ENCODE measurements at regions of chr7 and their contacts with region 1.

Region 1: DNA sequence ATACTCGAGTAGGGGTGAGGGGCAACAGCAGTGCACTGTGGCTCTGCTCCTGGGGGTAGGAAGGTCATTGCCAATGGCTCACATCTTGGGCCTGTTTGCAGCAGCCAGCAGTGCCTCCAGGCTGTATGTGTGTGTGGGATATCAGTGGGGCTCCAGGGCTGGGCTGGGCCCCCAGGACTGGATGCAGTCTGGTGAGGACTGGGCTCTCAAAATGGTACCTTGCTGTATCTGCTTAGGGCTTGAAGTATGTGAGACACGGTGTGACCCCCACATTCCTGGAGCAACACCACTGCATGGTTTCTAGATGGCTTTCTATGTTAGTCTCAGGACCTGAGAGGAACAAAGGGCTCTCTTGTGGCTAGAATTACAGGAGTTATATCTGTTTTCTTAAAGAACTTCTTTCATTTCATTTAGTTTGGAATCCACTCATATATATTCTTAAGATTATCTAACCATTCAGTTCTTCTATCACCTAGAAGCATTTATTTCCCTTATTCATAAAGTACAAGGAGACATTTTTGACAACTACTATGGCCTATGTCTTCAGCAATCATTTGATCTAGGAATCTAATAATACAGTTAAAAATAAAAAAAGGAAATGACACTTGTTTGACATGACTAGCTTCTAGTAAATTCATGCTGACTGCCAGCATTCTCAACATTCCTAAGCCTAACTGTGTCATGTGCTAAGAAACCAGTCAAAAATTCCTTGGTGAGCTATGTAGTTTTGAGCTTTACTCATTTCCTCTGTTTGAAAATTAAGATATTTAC is 443.2 kb upstream of the SEMA3A start:
- DNase-seq: peak; percentile 92
- H3K4me3 ChIP-seq: no peak overlapping the region
- H3K27ac ChIP-seq: peak overlapping the region; percentile 97
- H3K4me1 ChIP-seq: peaks cover 25% of the 10 kb centered on the region
- H3K27me3 ChIP-seq: no peaks in the 10 kb centered on the region
- CTCF ChIP-seq: no peak
- POLR2A ChIP-seq: no peak

Region 2: DNA sequence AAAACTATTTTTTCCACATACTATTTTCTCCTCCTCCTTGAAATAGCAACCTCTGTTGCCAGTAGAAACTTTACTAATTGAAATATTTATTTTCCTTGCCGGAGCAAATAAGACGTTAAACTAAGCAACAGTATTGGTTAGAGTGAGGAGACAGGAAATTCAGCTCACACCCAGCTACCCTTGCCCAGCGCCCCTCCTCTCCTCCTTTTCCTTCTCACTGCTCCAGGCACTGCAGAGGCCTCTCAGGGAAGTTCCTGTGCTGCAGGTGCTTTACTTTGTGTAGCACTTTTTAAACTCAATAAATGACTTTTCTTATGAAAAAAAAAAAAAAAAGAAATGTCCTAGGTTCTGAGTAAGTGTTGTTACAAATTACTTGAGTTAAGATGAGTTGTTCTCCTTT is 1122.8 kb before region 1 on chr7:
- CTCF ChIA-PET with region 1: no interaction called
- POLR2A ChIA-PET with region 1: no interaction called
- dilution Hi-C with region 1: no loop called
- intact Hi-C with region 1: no loop called
- DNase-seq: no peak
- H3K4me3 ChIP-seq: no peak overlapping the region
- H3K27ac ChIP-seq: no peak overlapping the region
- H3K4me1 ChIP-seq: no peaks in the 10 kb centered on the region
- H3K27me3 ChIP-seq: no peaks in the 10 kb centered on the region
- CTCF ChIP-seq: no peak
- POLR2A ChIP-seq: no peak

Region 3: DNA sequence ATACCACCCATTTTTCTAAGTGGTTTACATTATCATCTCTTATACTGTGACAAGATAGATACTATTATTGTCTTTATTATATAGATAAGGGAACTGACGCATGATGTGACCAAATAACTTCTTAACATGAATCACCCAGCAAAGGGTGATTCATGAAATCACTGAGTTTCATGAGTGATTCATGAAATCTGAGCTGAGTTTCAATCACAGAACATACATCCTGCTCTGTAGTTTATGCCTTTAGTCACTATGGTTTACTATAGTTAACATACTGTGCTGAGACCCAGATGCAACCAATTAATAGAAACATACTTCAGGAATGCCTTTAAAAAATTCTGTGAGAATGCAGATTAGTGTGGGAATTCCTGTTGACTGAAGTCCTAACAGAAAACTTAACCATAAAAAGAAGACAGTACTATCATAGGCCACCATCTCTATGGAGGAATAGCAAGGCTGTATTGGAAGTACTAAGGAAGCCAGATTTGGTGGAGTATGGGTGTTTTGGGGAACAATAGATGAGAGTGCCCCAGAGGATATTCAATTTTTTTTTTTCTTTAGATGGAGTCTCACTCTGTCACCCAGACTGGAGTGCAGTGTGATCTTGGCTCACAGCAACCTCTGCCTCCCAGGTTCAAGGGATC is 400.1 kb before region 1 on chr7:
- CTCF ChIA-PET with region 1: no interaction called
- POLR2A ChIA-PET with region 1: no interaction called
- dilution Hi-C with region 1: no loop called
- intact Hi-C with region 1: loop called (anchors 1 kb)
- DNase-seq: peak; percentile 81
- H3K4me3 ChIP-seq: no peak overlapping the region
- H3K27ac ChIP-seq: peak overlapping the region; percentile 79
- H3K4me1 ChIP-seq: peaks cover 24% of the 10 kb centered on the region
- H3K27me3 ChIP-seq: no peaks in the 10 kb centered on the region
- CTCF ChIP-seq: no peak
- POLR2A ChIP-seq: no peak

Region 4: GRCh38 chr7:84553711-84554110 is 84.0 kb before region 1 on chr7:
- CTCF ChIA-PET with region 1: no interaction called
- POLR2A ChIA-PET with region 1: no interaction called
- dilution Hi-C with region 1: no loop called
- intact Hi-C with region 1: no loop called
- DNase-seq: no peak
- H3K4me3 ChIP-seq: no peak overlapping the region
- H3K27ac ChIP-seq: no peak overlapping the region
- H3K4me1 ChIP-seq: no peaks in the 10 kb centered on the region
- H3K27me3 ChIP-seq: no peaks in the 10 kb centered on the region
- CTCF ChIP-seq: no peak
- POLR2A ChIP-seq: no peak

Region 5: GRCh38 chr7:84647797-84648757 is 10.3 kb after region 1 on chr7:
- CTCF ChIA-PET with region 1: interaction called, 37 read pairs
- POLR2A ChIA-PET with region 1: interaction called, 8 read pairs
- dilution Hi-C with region 1: no loop called
- intact Hi-C with region 1: no loop called
- DNase-seq: peak; percentile 70
- H3K4me3 ChIP-seq: no peak overlapping the region
- H3K27ac ChIP-seq: no peak overlapping the region
- H3K4me1 ChIP-seq: peaks cover 9% of the 10 kb centered on the region
- H3K27me3 ChIP-seq: no peaks in the 10 kb centered on the region
- CTCF ChIP-seq: no peak
- POLR2A ChIP-seq: no peak

Region 6: GRCh38 chr7:84675633-84676034 is 37.9 kb after region 1 on chr7:
- CTCF ChIA-PET with region 1: no interaction called
- POLR2A ChIA-PET with region 1: no interaction called
- dilution Hi-C with region 1: no loop called
- intact Hi-C with region 1: loop called (anchors 1 kb)
- DNase-seq: peak; percentile 85
- H3K4me3 ChIP-seq: no peak overlapping the region
- H3K27ac ChIP-seq: peak overlapping the region; percentile 16
- H3K4me1 ChIP-seq: peaks cover 26% of the 10 kb centered on the region
- H3K27me3 ChIP-seq: no peaks in the 10 kb centered on the region
- CTCF ChIP-seq: no peak
- POLR2A ChIP-seq: peak; percentile 29

Region 7: GRCh38 chr7:84801396-84801795 is 163.6 kb after region 1 on chr7:
- CTCF ChIA-PET with region 1: no interaction called
- POLR2A ChIA-PET with region 1: no interaction called
- dilution Hi-C with region 1: no loop called
- intact Hi-C with region 1: loop called (anchors 5 kb)
- DNase-seq: peak; percentile 75
- H3K4me3 ChIP-seq: no peak overlapping the region
- H3K27ac ChIP-seq: peak overlapping the region; percentile 17
- H3K4me1 ChIP-seq: peaks cover 5% of the 10 kb centered on the region
- H3K27me3 ChIP-seq: no peaks in the 10 kb centered on the region
- CTCF ChIP-seq: no peak
- POLR2A ChIP-seq: no peak

Region 8: GRCh38 chr7:85135977-85136376 is 498.2 kb after region 1 on chr7:
- CTCF ChIA-PET with region 1: no interaction called
- POLR2A ChIA-PET with region 1: no interaction called
- dilution Hi-C with region 1: no loop called
- intact Hi-C with region 1: loop called (anchors 1 kb)
- DNase-seq: peak; percentile 66
- H3K4me3 ChIP-seq: no peak overlapping the region
- H3K27ac ChIP-seq: peak overlapping the region; percentile 59
- H3K4me1 ChIP-seq: peaks cover 18% of the 10 kb centered on the region
- H3K27me3 ChIP-seq: no peaks in the 10 kb centered on the region
- CTCF ChIP-seq: no peak
- POLR2A ChIP-seq: peak; percentile 62